ENCODE measurements at regions of chr16 and their contacts with region 1.

Region 1: GRCh38 chr16:22190776-22191531 is 15.1 kb upstream of the EEF2K start:
- DNase-seq: peak; percentile 100
- ATAC-seq: peak; percentile 64 to 65
- H3K4me3 ChIP-seq: peak overlapping the region; percentile 53 to 73 (median 62)
- H3K27ac ChIP-seq: peak overlapping the region; percentile 89 to 98 (median 97)
- H3K4me1 ChIP-seq: peaks cover 19 to 21% of the 10 kb centered on the region in 2 donors
- H3K27me3 ChIP-seq: no peaks in the 10 kb centered on the region
- CTCF ChIP-seq: no peak
- POLR2A ChIP-seq: peak; percentile 88 to 94

Region 2: GRCh38 chr16:21158208-21159110 is 1032.5 kb before region 1 on chr16 and contains the start of gene LDAF1:
- in situ Hi-C with region 1: loop called in 1 of 4 experiments (anchors 25 kb)
- intact Hi-C with region 1: no loop called
- DNase-seq: peak; percentile 64 to 75
- ATAC-seq: peak; percentile 82
- H3K4me3 ChIP-seq: peak within 1 kb of the TSS; percentile 77 to 96 (median 86)
- H3K27ac ChIP-seq: peak within 1 kb of the TSS; percentile 81 to 95 (median 92)
- H3K4me1 ChIP-seq: peaks cover 35 to 59% of the 10 kb centered on the region in 2 donors
- H3K27me3 ChIP-seq: no peaks in the 10 kb centered on the region
- CTCF ChIP-seq: no peak
- POLR2A ChIP-seq: peak; percentile 52 to 67
- total RNA-seq, gene LDAF1: 19.4 to 70.0 (median 34.3) TPM

Region 3: DNA sequence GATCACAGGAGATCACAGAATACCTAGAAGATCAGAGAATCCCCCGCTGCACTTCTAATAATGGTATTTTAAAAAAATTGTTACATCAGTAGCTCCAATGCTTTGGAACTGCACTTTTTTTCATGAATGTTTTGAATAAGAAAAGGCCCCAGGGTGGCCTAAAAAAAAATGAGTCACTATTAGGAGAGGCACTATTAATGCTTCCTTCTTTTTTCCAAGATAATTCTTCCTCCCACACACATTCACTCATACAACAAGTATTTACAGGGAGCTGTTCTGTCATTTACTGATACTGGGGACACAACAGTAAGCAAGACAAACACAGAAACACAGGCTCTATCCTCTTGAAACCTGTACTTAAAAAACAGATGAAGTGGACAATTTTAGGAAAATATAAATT is 189.4 kb before region 1 on chr16:
- in situ Hi-C with region 1: loop called in 2 of 4 experiments (anchors 10 kb)
- intact Hi-C with region 1: loop called (anchors 2 kb)
- DNase-seq: no peak
- ATAC-seq: no peak
- H3K4me3 ChIP-seq: no peak overlapping the region
- H3K27ac ChIP-seq: no peak overlapping the region
- H3K4me1 ChIP-seq: peaks cover 0 to 19% of the 10 kb centered on the region in 2 donors
- H3K27me3 ChIP-seq: no peaks in the 10 kb centered on the region
- CTCF ChIP-seq: no peak
- POLR2A ChIP-seq: no peak

Region 4: DNA sequence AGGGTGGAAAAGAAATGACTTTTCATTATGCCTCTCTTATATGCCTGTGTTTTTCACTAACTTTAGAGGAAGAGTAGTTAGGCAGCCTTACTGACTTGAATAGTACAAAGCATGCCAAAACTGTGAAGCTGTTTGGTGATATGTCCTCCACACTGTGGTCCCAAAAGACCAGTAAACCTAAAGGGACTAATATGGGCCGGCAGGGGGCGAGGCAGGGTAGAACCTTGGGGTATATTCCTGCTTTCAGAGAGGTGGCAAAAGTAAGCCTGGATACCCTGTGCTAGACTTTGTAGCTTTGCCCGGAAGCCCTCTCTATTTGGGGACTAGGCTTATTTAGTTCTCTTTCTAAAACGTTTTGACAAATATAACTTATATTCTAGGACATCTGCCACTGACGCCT is 135.1 kb before region 1 on chr16:
- in situ Hi-C with region 1: no loop called
- intact Hi-C with region 1: no loop called
- DNase-seq: no peak
- ATAC-seq: no peak
- H3K4me3 ChIP-seq: no peak overlapping the region
- H3K27ac ChIP-seq: no peak overlapping the region
- H3K4me1 ChIP-seq: no peaks in the 10 kb centered on the region
- H3K27me3 ChIP-seq: no peaks in the 10 kb centered on the region
- CTCF ChIP-seq: no peak
- POLR2A ChIP-seq: no peak

Region 5: GRCh38 chr16:22089910-22090309 is 101.0 kb before region 1 on chr16:
- in situ Hi-C with region 1: loop called in 1 of 4 experiments (anchors 10 kb)
- intact Hi-C with region 1: loop called (anchors 5 kb)
- DNase-seq: no peak
- ATAC-seq: no peak
- H3K4me3 ChIP-seq: no peak overlapping the region
- H3K27ac ChIP-seq: no peak overlapping the region
- H3K4me1 ChIP-seq: peaks cover 4 to 9% of the 10 kb centered on the region in 2 donors
- H3K27me3 ChIP-seq: no peaks in the 10 kb centered on the region
- CTCF ChIP-seq: no peak
- POLR2A ChIP-seq: no peak

Region 6: DNA sequence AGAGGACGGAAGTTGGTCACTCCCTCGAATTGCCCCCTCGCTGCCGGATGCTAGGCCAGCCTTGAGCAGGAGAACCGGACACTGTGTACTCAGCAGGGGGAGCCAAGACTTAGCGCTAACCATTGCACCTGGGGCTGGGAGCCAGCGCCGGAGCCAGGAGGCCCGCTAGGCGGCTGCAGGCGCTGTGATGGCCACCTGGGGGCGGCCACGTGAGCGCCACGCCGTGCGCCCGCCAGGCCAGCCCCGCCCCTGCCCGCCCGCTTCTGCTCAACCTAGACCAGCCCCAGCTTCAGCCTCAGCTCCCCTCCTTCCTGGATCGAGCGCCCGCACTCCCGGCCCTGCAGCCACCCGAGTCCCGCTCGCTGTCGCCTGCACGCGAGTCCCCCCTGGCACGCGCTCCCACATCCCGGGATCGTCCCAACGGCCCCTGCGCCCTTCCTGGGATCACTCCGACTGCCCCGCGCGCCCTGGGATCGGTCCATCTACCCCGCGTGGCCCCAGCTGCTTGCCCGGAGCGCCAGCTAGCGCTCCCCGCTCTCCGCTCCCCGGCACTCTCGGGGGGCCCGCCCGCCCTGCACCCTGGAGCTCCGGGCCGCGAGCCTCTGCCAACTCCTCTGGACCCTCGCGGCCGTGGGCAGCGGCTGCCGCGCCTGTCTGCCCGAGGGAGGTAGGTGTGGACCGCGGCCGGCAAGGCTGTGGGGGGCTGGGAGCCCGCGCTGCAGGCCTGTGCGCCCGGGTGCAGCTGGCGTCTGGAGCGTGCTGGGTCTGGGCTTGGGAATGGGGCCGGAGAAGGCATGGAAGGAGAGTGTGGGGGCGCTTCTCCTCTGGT is 15.3 kb after region 1 on chr16 and contains the start of gene EEF2K:
- in situ Hi-C with region 1: no loop called
- intact Hi-C with region 1: loop called (anchors 1 kb)
- DNase-seq: peak; percentile 93 to 97
- ATAC-seq: peak; percentile 70 to 82
- H3K4me3 ChIP-seq: peak within 1 kb of the TSS; percentile 78 to 90 (median 89)
- H3K27ac ChIP-seq: peak within 1 kb of the TSS; percentile 91 to 97 (median 96)
- H3K4me1 ChIP-seq: peaks cover 47 to 49% of the 10 kb centered on the region in 2 donors
- H3K27me3 ChIP-seq: no peaks in the 10 kb centered on the region
- CTCF ChIP-seq: peak; percentile 80 to 94 (median 91)
- POLR2A ChIP-seq: peak; percentile 82 to 85
- total RNA-seq, gene EEF2K: 18.7 to 39.9 (median 21.2) TPM

Region 7: DNA sequence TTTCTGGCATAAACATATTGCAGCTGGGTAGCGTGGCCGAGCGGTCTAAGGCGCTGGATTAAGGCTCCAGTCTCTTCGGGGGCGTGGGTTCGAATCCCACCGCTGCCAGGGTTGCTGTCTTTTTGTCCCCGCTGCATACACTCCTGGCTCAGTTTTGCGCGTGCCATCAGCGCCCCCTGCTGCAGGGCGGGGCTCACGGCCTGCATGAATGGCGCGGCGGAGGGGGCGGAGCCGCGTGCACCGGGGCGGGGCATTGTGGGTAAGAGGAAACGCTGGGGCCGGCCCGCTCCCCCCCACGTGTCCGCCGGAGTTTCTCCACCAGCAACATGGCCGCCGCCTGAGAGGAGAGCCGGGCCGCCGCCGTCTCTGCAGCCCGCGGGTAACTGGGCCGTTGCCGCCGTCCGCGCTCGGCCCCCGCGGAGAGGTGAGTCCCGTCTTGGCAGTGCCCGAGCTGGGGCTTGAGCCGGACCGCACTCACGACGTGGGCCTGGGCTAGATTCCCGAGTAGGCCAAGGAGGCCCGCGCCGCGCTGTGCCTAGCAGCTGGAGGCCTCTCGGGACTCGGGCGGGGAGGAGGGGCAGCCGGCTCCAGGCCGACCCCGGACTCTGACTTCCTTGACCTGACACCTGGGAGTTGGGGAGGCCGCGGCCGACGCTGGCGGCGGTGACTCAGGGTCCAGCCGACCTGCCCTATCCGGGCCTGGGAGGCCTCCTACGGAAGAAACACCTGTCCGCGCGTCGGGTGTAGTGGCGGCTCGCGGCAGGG is 106.3 kb after region 1 on chr16 and contains the start of gene POLR3E:
- in situ Hi-C with region 1: loop called in 3 of 4 experiments (anchors 5 kb)
- intact Hi-C with region 1: loop called (anchors 1 kb)
- DNase-seq: peak; percentile 98 to 99
- ATAC-seq: peak; percentile 77 to 79
- H3K4me3 ChIP-seq: peak within 1 kb of the TSS; percentile 87 to 97 (median 94)
- H3K27ac ChIP-seq: peak within 1 kb of the TSS; percentile 97 to 100 (median 98)
- H3K4me1 ChIP-seq: peaks cover 12 to 18% of the 10 kb centered on the region in 2 donors
- H3K27me3 ChIP-seq: no peaks in the 10 kb centered on the region
- CTCF ChIP-seq: peak; percentile 93 to 98 (median 98)
- POLR2A ChIP-seq: peak; percentile 88 to 90
- total RNA-seq, gene POLR3E: 105 to 182 (median 116) TPM